BJ (cell line): ENCODE measurements at regions of chr6 and their contacts with region 1.

Region 1: GRCh38 chr6:13873285-13874190 is 51.2 kb upstream of the RNF182 start:
- DNase-seq: no peak
- H3K4me3 ChIP-seq: peak overlapping the region; percentile 37
- H3K27me3 ChIP-seq: peaks cover 2% of the 10 kb centered on the region; the same call in 1 of the 2 replicates
- CTCF ChIP-seq: peak; percentile 83

Region 2: DNA sequence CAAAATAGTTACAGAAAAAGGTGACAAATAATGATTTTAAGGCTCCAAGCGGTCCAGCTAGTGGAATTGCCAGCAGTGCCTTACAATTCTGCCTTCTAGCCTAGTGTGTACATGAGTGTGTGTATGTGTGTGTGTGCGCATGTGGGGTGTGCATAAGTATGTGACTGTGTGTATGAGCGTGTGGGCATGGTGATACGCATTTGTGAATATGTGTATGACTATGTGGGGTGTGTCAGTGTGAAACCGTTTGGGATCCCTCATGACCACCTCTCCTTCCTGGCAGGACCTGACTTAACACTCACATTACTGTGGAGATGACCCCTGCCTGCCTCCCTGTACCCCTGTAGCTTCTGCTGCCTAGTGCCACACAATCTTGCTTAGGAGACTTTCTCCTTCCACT is 10.9 kb after region 1 on chr6:
- CTCF ChIA-PET with region 1: interaction called, 17 read pairs
- POLR2A ChIA-PET with region 1: no interaction called
- DNase-seq: no peak
- H3K4me3 ChIP-seq: no peak overlapping the region
- H3K27me3 ChIP-seq: no peaks in the 10 kb centered on the region; the same call in 1 of the 2 replicates
- CTCF ChIP-seq: no peak